ENCODE measurements at regions of chr22 and their contacts with region 1.

Region 1: DNA sequence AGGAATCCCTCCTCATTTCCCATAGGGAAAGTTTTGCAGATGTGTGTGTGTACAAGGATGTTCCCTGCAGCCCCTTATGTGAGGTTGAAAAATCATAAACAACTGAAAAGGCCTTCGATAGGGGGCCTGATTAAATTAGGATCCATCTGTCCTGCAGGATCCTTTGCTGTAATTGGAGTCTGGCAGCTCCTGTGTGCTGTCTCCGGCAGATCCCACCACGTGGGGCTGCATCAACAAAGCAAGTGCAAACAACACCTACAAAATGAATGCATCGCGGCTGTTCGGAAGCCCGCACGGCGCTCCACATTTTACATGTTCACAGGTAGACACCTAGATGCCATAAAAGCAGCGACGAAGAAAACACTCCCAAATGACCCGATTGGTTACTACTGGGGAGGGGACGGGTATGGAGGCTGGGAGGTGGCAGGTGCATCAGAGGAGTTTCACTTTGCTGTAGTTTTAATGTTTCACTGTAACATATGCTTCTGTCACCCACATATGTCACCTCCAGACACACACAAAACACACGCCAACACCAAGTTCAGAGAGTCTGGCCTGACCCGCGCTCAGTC is 52.2 kb downstream of the NFAM1 start:
- DNase-seq: no peak
- ATAC-seq: no peak
- H3K4me3 Mint-ChIP-seq: no peak overlapping the region
- H3K27ac Mint-ChIP-seq: no peak overlapping the region
- H3K4me1 Mint-ChIP-seq: no peaks in the 10 kb centered on the region
- H3K27me3 Mint-ChIP-seq: peaks cover 22% of the 10 kb centered on the region
- CTCF ChIP-seq: no peak

Region 2: GRCh38 chr22:42396621-42397331 is 16.7 kb after region 1 on chr22:
- CTCF ChIA-PET with region 1: no interaction called
- POLR2A ChIA-PET with region 1: interaction called, 6 read pairs
- intact Hi-C with region 1: loop called (anchors 2 kb)
- DNase-seq: peak; percentile 49
- ATAC-seq: peak; percentile 59
- H3K4me3 Mint-ChIP-seq: peak overlapping the region; percentile 75
- H3K27ac Mint-ChIP-seq: peak overlapping the region; percentile 90
- H3K4me1 Mint-ChIP-seq: peaks cover 51% of the 10 kb centered on the region
- H3K27me3 Mint-ChIP-seq: no peaks in the 10 kb centered on the region
- CTCF ChIP-seq: no peak

Region 3: GRCh38 chr22:42452456-42452855 is 72.4 kb after region 1 on chr22:
- CTCF ChIA-PET with region 1: no interaction called
- POLR2A ChIA-PET with region 1: no interaction called
- intact Hi-C with region 1: no loop called
- DNase-seq: no peak
- ATAC-seq: no peak
- H3K4me3 Mint-ChIP-seq: no peak overlapping the region
- H3K27ac Mint-ChIP-seq: no peak overlapping the region
- H3K4me1 Mint-ChIP-seq: peaks cover 2% of the 10 kb centered on the region
- H3K27me3 Mint-ChIP-seq: peaks cover 10% of the 10 kb centered on the region
- CTCF ChIP-seq: no peak

Region 4: GRCh38 chr22:42473484-42474193 is 93.6 kb after region 1 on chr22:
- CTCF ChIA-PET with region 1: no interaction called
- POLR2A ChIA-PET with region 1: no interaction called
- intact Hi-C with region 1: no loop called
- DNase-seq: no peak
- ATAC-seq: peak; percentile 64
- H3K4me3 Mint-ChIP-seq: no peak overlapping the region
- H3K27ac Mint-ChIP-seq: no peak overlapping the region
- H3K4me1 Mint-ChIP-seq: peaks cover 3% of the 10 kb centered on the region
- H3K27me3 Mint-ChIP-seq: peaks cover 3% of the 10 kb centered on the region
- CTCF ChIP-seq: peak; percentile 76

Measured in activated B cell treated with CpG ODN at 0.5 μM for 24 hours (primary cell).